ENCODE measurements at regions of chr4 and their contacts with region 1.

Region 1: GRCh38 chr4:139099366-139099982 is 77.5 kb downstream of the ELF2 start:
- DNase-seq: peak; percentile 54
- H3K4me3 Mint-ChIP-seq: no peak overlapping the region
- H3K27ac Mint-ChIP-seq: no peak overlapping the region
- H3K4me1 Mint-ChIP-seq: no peaks in the 10 kb centered on the region
- H3K27me3 Mint-ChIP-seq: no peaks in the 10 kb centered on the region

Region 2: DNA sequence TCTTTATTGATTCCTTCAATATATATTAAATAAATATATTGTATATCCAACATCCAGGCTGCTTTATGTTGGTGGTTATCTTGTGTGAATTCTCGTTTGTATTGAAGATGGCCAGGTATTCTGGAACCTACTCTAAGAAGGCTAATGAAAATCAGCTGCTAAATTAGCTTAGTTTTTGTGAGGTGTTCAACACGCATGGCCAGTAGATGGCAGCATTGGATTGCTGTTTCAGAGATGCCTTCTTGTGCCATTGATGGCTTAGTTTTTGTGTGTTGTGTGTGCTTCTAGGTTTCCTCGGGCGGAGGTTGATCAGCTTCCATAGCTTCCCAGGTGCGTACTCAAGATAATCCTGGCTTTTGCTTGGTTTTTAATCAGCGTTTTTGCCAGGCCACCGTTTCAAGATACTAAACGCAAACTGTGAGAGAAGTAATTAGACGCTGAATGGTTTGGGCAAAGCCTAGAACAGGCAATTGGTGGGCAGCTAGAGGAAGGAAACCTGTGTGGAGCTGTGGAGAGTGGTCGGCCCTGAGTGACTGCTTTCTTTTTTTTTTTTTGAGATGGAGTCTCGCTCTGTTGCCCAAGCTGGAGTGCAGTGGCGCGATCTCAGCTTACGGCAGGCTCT is 68.7 kb before region 1 on chr4:
- intact Hi-C with region 1: loop called (anchors 1 kb)
- DNase-seq: peak; percentile 55
- H3K4me3 Mint-ChIP-seq: no peak overlapping the region
- H3K27ac Mint-ChIP-seq: no peak overlapping the region
- H3K4me1 Mint-ChIP-seq: peaks cover 15% of the 10 kb centered on the region
- H3K27me3 Mint-ChIP-seq: no peaks in the 10 kb centered on the region

Region 3: GRCh38 chr4:139167774-139168444 is 68.4 kb after region 1 on chr4:
- intact Hi-C with region 1: loop called (anchors 2 kb)
- DNase-seq: no peak
- H3K4me3 Mint-ChIP-seq: no peak overlapping the region
- H3K27ac Mint-ChIP-seq: no peak overlapping the region
- H3K4me1 Mint-ChIP-seq: peaks cover 23% of the 10 kb centered on the region
- H3K27me3 Mint-ChIP-seq: no peaks in the 10 kb centered on the region

Region 4: DNA sequence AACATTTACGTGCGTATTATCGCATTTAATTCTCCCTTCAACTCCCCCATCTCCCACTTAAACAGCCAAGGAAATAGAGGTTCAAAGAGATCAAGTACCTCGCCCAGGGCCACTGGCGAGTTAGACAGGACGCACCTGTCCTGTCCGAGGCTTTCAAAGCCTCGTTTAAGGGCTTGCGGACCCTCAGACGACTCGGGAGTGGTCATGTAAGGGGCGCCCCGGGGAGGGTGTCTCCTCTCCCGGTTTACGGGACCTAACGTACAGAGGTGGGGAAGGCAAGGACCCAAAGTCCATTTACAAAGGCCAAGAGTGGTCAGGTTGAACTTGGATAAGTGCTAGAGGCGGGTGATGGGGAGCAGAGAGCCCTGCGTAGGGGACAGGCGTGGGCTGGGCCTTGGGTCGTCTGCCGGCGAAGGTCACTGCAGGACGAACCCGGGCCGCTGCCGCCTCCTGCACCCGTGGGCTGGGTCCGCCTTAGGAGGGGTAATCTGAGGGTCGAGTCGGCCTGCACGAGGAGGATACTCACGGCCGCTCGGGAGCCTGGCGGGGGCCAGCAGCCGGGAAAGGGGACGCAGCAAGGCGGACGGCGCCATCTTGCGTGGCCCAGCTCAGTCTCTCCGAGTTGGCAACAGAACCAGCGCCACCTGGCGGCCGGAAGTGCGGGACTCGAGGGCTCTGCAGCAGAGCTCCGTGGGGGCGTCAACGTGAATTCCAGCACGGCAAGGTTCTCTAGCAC is 195.9 kb after region 1 on chr4:
- intact Hi-C with region 1: loop called (anchors 1 kb)
- DNase-seq: peak; percentile 92
- H3K4me3 Mint-ChIP-seq: peak overlapping the region; percentile 93
- H3K27ac Mint-ChIP-seq: peak overlapping the region; percentile 94
- H3K4me1 Mint-ChIP-seq: peaks cover 39% of the 10 kb centered on the region
- H3K27me3 Mint-ChIP-seq: no peaks in the 10 kb centered on the region

Region 5: GRCh38 chr4:139530833-139531427 is 431.5 kb after region 1 on chr4:
- intact Hi-C with region 1: loop called (anchors 2 kb)
- DNase-seq: peak; percentile 20
- H3K4me3 Mint-ChIP-seq: no peak overlapping the region
- H3K27ac Mint-ChIP-seq: peak overlapping the region; percentile 37
- H3K4me1 Mint-ChIP-seq: peaks cover 6% of the 10 kb centered on the region
- H3K27me3 Mint-ChIP-seq: no peaks in the 10 kb centered on the region